ENCODE measurements at regions of chr3 and their contacts with region 1.

Region 1: DNA sequence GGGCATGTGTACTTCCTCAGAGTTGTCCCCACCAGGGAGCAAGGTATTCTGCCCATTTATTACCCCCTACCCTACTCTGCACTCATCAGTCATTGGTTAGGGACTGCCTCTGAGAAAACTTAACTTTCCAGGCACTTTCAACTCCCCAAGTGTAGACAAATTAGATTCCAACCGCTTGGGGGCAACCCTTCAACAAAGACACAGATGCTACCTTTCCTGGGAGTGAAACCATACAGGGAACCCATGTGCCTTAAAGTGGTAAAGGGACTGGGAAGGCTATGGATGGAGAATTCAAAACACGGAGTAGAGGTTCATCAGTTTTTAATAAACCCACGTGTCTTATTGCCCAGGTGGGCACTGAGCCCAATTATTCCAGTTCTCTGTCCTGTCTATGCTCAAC is 19.4 kb upstream of the UBE2E2 start:
- DNase-seq: peak; percentile 20 to 60 (median 42)
- H3K4me3 ChIP-seq: no peak overlapping the region
- H3K27ac ChIP-seq: no peak overlapping the region
- H3K4me1 ChIP-seq: no peaks in the 10 kb centered on the region
- H3K27me3 ChIP-seq: no peaks in the 10 kb centered on the region
- CTCF ChIP-seq: peak; percentile 21 to 51 (median 48)
- POLR2A ChIP-seq: no peak

Region 2: DNA sequence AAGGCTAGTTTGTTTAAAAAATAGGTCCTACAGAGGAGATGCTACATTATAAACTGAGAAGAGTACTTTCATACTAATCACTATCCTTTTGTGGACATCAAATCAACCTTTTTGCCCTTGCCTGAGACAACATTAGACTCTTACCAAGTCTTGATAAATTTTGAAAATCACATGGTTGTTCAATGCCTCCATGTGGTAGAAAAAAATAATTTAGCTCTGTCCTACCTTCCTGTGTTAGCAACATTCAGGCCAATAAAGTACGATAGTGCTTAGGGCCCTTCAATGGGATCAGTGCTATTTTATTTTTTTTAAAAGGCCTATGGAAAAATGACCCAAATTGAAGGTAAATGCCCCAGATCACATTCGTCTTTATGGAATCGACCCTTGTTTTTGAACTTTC is 617.0 kb after region 1 on chr3:
- intact Hi-C with region 1: loop called in 1 of 2 experiments (anchors 5 kb)
- DNase-seq: no peak
- H3K4me3 ChIP-seq: no peak overlapping the region
- H3K27ac ChIP-seq: no peak overlapping the region
- H3K4me1 ChIP-seq: no peaks in the 10 kb centered on the region
- H3K27me3 ChIP-seq: no peaks in the 10 kb centered on the region
- CTCF ChIP-seq: peak in 5 of 6 experiments; percentile 18 to 46 (median 34)
- POLR2A ChIP-seq: no peak